ENCODE measurements at regions of chr6 and their contacts with region 1.

Region 1: GRCh38 chr6:28104392-28105244 is 19.8 kb upstream of the ZSCAN16 start:
- DNase-seq: peak; percentile 89
- ATAC-seq: peak; percentile 100
- H3K4me3 Mint-ChIP-seq: peak overlapping the region; percentile 82
- H3K27ac Mint-ChIP-seq: peak overlapping the region; percentile 86
- H3K4me1 Mint-ChIP-seq: peaks cover 14% of the 10 kb centered on the region
- H3K27me3 Mint-ChIP-seq: peaks cover 30% of the 10 kb centered on the region

Region 2: DNA sequence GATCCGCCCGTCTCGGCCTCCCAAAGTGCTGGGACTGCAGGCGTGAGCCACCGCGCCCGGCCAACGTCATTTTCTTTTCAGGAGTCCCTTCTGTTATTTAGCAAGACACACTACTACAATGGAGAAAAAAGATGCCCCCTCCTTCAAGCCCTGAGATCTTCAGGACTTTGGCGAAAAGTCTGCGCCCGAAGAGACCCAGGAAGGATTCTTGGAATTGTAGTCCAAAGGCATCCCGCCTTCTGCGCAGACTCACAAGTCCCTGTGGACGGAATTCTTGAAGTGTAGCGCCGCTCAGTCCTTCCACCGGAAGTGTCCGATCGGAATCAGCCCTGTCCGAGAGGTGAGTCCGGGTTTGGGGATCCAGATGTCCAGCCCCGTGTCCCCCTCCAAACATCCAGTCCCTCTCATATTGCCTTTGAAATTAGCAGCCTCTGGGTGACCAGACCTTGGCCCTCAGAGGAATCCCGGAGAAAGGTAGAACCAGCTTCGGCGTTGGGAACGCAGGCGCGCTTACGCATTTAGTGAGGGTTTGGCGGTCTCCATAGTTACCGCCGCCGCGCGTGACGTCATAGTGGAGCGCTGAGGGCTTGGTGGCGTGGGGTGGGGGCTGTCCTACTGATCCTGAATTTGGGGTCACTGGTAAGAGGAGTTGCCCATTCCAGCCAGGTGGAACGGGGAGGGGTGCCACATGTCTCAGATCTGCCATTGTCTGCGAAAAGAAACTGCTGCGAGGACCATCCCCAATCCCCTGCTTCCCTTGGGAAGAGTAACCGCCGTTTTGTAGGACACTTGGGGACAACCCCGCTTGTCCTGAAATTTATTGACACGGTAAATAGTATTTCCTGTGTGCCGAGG is 23.8 kb before region 1 on chr6:
- CTCF ChIA-PET with region 1: interaction called, 11 read pairs
- POLR2A ChIA-PET with region 1: no interaction called
- DNase-seq: peak; percentile 92
- ATAC-seq: peak; percentile 82
- H3K4me3 Mint-ChIP-seq: peak overlapping the region; percentile 96
- H3K27ac Mint-ChIP-seq: peak overlapping the region; percentile 90
- H3K4me1 Mint-ChIP-seq: peaks cover 17% of the 10 kb centered on the region
- H3K27me3 Mint-ChIP-seq: no peaks in the 10 kb centered on the region

Region 3: GRCh38 chr6:28124102-28124970 is 19.7 kb after region 1 on chr6 and contains the start of gene ZSCAN16:
- CTCF ChIA-PET with region 1: interaction called, 13 read pairs
- POLR2A ChIA-PET with region 1: interaction called, 5 read pairs
- DNase-seq: peak; percentile 81
- ATAC-seq: peak; percentile 99
- H3K4me3 Mint-ChIP-seq: peak within 1 kb of the TSS; percentile 92
- H3K27ac Mint-ChIP-seq: peak within 1 kb of the TSS; percentile 90
- H3K4me1 Mint-ChIP-seq: peaks cover 44% of the 10 kb centered on the region
- H3K27me3 Mint-ChIP-seq: no peaks in the 10 kb centered on the region
- total RNA-seq, gene ZSCAN16: 2.9 to 4.5 TPM

Measured in activated CD8-positive, alpha-beta T cell treated with anti-CD3 and anti-CD28 coated beads, Interleukin-2, amount 10 ng/mL, durations not matched to agents 7 days and 5 days (primary cell).